ENCODE measurements at regions of chr6 and their contacts with region 1.

Region 1: DNA sequence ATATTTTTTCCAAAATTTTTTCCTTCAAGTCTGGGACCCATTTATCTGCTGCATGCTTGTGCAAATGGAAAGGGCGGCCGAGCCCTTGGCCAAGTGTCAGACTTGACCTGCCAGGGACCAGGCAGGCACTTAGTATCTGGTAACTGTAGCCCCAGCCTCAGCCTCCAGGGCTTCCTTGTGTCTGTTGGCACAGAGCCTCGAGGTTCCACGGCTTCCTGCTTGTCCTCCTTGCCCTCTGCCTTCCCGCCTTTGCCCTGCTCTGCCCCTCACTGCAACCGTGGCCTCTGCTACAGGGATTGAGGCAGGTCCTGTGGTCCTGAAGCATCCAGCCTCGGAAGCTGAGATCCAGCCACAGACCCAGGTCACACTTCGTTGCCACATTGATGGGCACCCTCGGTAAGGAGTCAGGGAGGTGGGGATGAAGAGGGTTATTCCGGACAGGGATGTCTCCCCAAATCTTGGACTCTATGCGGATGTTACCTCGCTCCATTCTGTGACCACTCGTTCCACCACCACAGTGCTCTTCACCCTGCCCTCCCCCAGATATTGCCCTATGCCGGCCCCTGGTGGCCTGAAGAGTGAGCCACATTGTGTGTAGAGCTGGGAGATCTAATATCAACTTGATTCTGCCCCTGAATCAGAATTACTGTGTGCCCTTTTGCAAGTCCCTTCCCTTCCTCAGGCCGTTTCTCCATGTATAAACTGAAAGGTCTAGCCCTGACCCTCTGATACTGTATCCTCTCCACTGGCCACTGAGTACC is 41.5 kb upstream of the SRF start:
- DNase-seq: peak; percentile 56 to 75 (median 63)
- ATAC-seq: peak; percentile 97
- H3K4me3 ChIP-seq: no peak overlapping the region
- H3K27ac ChIP-seq: no peak overlapping the region
- H3K4me1 ChIP-seq: peaks cover 0 to 22% of the 10 kb centered on the region in 2 experiments; a peak in 3 of 5 replicates
- H3K27me3 ChIP-seq: peaks cover 0 to 39% of the 10 kb centered on the region in 2 experiments; a peak in 2 of 5 replicates
- CTCF ChIP-seq: peak; percentile 90 to 98 (median 92)
- EP300 ChIP-seq: no peak
- POLR2A ChIP-seq: no peak
- RAD21 ChIP-seq: peak; percentile 95 to 97

Region 2: GRCh38 chr6:42890311-42891198 is 239.1 kb before region 1 on chr6:
- CTCF ChIA-PET with region 1: no interaction called
- POLR2A ChIA-PET with region 1: no interaction called
- in situ Hi-C with region 1: no loop called
- intact Hi-C with region 1: no loop called
- DNase-seq: peak in 2 of 4 experiments; percentile 24 to 25
- ATAC-seq: peak; percentile 63
- H3K4me3 ChIP-seq: no peak overlapping the region
- H3K27ac ChIP-seq: no peak overlapping the region
- H3K4me1 ChIP-seq: peaks cover 15 to 20% of the 10 kb centered on the region in 2 experiments
- H3K27me3 ChIP-seq: no peaks in the 10 kb centered on the region
- CTCF ChIP-seq: no peak
- EP300 ChIP-seq: no peak
- POLR2A ChIP-seq: peak; percentile 74
- RAD21 ChIP-seq: no peak

Region 3: DNA sequence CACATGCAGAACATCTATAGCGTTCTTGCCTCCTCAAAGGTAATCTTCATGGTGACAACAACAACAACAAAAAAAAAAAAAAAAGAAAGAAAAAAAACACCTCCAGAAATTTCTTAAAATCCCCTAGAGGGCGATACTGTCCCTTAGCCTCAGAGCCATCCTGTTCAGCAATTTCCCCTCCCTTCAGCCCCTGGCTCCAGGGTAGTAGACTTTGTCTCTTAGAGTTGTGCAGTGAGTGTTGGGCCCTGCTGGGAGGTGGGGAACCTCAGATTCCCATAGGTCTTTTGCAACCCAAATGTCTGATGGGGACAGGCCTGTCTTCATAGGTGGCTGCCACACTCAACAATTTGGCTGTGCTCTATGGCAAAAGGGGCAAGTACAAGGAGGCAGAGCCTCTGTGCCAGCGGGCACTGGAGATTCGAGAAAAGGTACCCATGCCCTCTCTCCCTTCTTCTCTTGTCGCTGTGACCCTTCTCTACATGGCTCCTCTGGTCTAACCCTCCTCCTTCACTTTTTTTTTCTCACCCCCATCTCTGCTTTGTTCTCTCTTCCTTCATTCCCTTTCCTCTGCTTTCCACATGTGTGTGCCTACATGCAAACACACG is 59.5 kb before region 1 on chr6:
- CTCF ChIA-PET with region 1: interaction called, 11 read pairs
- POLR2A ChIA-PET with region 1: interaction called, 3 read pairs
- in situ Hi-C with region 1: no loop called
- intact Hi-C with region 1: loop called (anchors 1 kb)
- DNase-seq: peak; percentile 51 to 85 (median 68)
- ATAC-seq: peak; percentile 91
- H3K4me3 ChIP-seq: no peak overlapping the region
- H3K27ac ChIP-seq: no peak overlapping the region
- H3K4me1 ChIP-seq: no peaks in the 10 kb centered on the region
- H3K27me3 ChIP-seq: no peaks in the 10 kb centered on the region
- CTCF ChIP-seq: peak; percentile 69 to 94 (median 82)
- EP300 ChIP-seq: no peak
- POLR2A ChIP-seq: no peak
- RAD21 ChIP-seq: peak; percentile 68 to 77

Region 4: GRCh38 chr6:43113431-43114260 is 16.0 kb before region 1 on chr6:
- CTCF ChIA-PET with region 1: no interaction called
- POLR2A ChIA-PET with region 1: interaction called, 27 read pairs
- in situ Hi-C with region 1: no loop called
- intact Hi-C with region 1: no loop called
- DNase-seq: peak in 2 of 4 experiments; percentile 22 to 39
- ATAC-seq: peak; percentile 67
- H3K4me3 ChIP-seq: no peak overlapping the region
- H3K27ac ChIP-seq: peak overlapping the region; percentile 70
- H3K4me1 ChIP-seq: peaks cover 25 to 26% of the 10 kb centered on the region in 2 experiments
- H3K27me3 ChIP-seq: no peaks in the 10 kb centered on the region
- CTCF ChIP-seq: no peak
- EP300 ChIP-seq: no peak
- POLR2A ChIP-seq: no peak
- RAD21 ChIP-seq: no peak

Measured in K562 (cell line).